Mucosa of descending colon (tissue), 3 donors: ENCODE measurements at regions of chr12 and their contacts with region 1.

Region 1: GRCh38 chr12:120720234-120720986 is 5.2 kb upstream of the ACADS start:
- DNase-seq: no peak
- ATAC-seq: peak; percentile 31
- H3K4me3 ChIP-seq: no peak overlapping the region
- H3K4me1 ChIP-seq: peaks cover 28% of the 10 kb centered on the region
- CTCF ChIP-seq: no peak

Region 2: GRCh38 chr12:120649442-120650232 is 70.8 kb before region 1 on chr12:
- intact Hi-C with region 1: loop called in 1 of 2 experiments (anchors 5 kb)
- DNase-seq: no peak
- ATAC-seq: no peak
- H3K4me3 ChIP-seq: no peak overlapping the region
- H3K4me1 ChIP-seq: peaks cover 2% of the 10 kb centered on the region
- CTCF ChIP-seq: no peak

Region 3: DNA sequence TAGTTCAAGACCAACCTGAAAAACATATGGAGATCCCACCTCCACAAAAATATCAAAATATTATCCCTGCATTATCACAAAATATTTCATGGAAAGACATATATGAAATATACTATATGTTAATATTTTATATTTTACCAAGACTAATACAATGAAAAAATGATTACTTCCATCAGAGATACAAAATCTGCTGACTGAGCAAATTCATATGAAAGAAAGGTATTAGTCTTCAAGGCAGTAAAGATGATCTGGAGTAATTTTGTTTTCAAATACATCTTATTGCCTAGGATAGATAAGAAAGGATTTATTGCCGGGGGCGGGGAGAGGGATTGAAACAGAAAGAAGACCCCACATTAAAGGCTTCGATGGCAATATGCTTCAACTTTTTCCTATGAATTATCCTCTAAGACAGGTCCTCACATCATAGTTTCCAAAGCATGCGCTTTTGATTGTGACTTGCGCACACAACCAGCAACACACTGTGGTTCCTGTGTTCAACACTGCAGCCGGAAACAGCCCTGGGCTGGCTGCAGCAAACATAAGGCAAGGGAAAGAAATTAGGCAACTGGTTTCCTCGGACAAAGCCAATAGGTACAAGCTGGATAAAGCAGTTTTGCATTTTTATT is 100.6 kb after region 1 on chr12:
- intact Hi-C with region 1: no loop called
- DNase-seq: peak in 1 of 3 donors; percentile 35
- ATAC-seq: peak; percentile 60
- H3K4me3 ChIP-seq: no peak overlapping the region
- H3K4me1 ChIP-seq: no peaks in the 10 kb centered on the region
- CTCF ChIP-seq: no peak